RWPE1 (cell line): ENCODE measurements at regions of chr10 and their contacts with region 1.

Region 1: GRCh38 chr10:88553116-88553752 is 29.9 kb downstream of the RNLS start:
- DNase-seq: peak; percentile 68
- H3K27ac ChIP-seq: no peak overlapping the region
- CTCF ChIP-seq: peak; percentile 79

Region 2: DNA sequence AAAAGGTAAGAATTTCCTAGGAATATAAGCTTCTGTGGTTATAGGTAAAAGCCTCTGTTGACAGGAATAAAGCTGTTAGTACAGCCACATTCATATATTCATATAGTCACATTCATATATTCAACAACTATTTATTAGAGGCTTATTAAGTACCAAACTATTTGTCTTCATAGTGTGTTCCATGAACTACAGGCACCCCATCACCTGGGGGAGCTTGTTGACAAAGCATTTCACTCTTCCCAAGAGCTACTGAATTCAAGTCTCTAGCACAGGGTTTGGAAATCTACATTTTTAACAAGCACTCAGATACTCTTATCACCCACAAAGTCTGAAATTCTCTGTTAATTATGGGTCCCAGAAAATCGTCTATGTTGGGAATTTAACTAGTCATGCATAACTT is 80.7 kb before region 1 on chr10:
- CTCF ChIA-PET with region 1: interaction called, 14 read pairs
- POLR2A ChIA-PET with region 1: no interaction called
- DNase-seq: peak; percentile 29
- H3K27ac ChIP-seq: no peak overlapping the region
- CTCF ChIP-seq: no peak